ENCODE measurements at regions of chr17 and their contacts with region 1.

Region 1: DNA sequence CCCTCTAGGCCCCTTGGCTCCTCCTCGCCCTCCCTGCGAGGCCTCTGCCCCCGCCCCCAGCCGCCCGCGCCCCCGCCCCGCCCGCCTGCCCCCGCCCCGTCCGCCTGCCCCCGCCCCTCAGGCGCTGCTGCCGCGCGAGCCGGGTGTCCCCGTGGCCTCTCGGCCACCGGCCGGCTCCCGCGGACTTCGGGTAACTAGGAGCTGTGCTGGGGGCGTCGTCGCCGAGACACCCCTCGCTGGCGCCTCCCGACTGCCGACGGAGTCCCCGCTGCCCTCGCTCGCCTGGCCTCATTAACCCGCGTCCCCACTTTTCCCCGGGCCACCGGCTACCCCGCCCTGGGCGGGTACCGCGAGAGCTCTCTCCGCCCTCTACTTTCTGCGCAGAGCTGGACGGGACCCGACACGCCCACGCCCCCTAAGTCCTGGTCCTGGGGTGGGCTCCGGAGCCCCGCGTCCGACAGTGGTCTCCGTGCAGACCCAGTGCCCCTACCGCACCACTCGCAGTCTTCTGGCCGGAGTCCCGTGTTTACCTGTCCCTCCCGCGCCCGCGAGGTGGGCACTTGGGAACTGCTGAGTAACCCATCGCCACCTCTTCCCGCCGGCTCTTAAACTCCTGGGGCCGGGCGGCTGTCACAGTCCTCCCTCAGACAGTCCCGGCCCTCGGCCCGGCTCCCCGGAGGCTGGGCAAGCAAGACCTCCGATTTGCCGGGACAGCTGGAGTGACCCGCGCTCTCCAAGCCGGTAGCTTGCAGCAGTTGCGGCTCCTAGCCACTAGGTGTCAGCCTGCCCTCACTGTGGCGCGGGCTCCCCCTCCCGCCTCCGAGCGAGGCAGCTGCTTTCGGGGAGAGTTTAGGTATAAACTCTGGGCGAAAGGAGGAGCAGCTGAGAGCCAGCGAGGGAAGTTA is at the start of gene TLCD1:
- DNase-seq: peak; percentile 77 to 82
- ATAC-seq: peak; percentile 59 to 65
- H3K4me3 ChIP-seq: peak within 1 kb of the TSS; percentile 70 to 92 (median 80)
- H3K27ac ChIP-seq: peak within 1 kb of the TSS; percentile 56 to 99 (median 98)
- H3K4me1 ChIP-seq: peaks cover 34 to 36% of the 10 kb centered on the region in 2 donors
- H3K27me3 ChIP-seq: no peaks in the 10 kb centered on the region
- CTCF ChIP-seq: peak; percentile 98 to 100 (median 99)
- POLR2A ChIP-seq: no peak
- total RNA-seq, gene TLCD1: 0.46 to 0.82 (median 0.75) TPM in 3 of 4 donors, not detected in the other

Region 2: GRCh38 chr17:28743225-28744103 is 17.0 kb after region 1 on chr17 and contains the start of gene TRAF4:
- in situ Hi-C with region 1: no loop called
- intact Hi-C with region 1: loop called (anchors 1 kb)
- DNase-seq: no peak
- ATAC-seq: peak; percentile 79 to 80
- H3K4me3 ChIP-seq: peak within 1 kb of the TSS; percentile 71 to 89 (median 76)
- H3K27ac ChIP-seq: peak within 1 kb of the TSS; percentile 68 to 81 (median 72)
- H3K4me1 ChIP-seq: peaks cover 20 to 29% of the 10 kb centered on the region in 2 donors
- H3K27me3 ChIP-seq: no peaks in the 10 kb centered on the region
- CTCF ChIP-seq: peak; percentile 8 to 55 (median 41)
- POLR2A ChIP-seq: peak; percentile 90 to 91
- total RNA-seq, gene TRAF4: 2.0 to 6.4 (median 3.8) TPM

Region 3: DNA sequence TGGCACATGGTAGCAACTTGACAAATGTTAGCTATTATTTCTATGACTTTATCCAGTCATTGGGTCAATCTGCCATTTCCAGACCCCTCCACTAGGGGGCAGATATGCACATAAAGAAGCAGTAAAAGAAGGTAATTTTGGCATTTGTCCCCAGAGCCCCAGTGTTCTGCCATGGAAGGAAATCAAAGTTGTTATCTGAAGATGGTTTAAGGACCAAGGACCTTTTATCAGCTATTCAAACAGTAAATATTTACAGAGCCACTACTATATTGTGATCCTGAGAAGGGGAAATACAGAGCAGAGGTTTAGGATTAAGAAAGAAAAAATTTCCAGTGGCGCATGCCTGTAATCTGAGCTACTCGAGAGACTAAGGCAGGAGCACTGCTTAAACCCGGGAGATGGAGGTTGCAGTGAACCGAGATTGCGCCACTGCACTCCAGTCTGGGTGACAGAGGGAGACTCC is 37.4 kb after region 1 on chr17:
- in situ Hi-C with region 1: no loop called
- intact Hi-C with region 1: loop called (anchors 5 kb)
- DNase-seq: peak; percentile 55 to 72
- ATAC-seq: peak; percentile 53 to 67
- H3K4me3 ChIP-seq: no peak overlapping the region
- H3K27ac ChIP-seq: peak overlapping the region in 3 of 4 donors; percentile 29 to 55 (median 40)
- H3K4me1 ChIP-seq: peaks cover 4 to 12% of the 10 kb centered on the region in 2 donors
- H3K27me3 ChIP-seq: no peaks in the 10 kb centered on the region
- CTCF ChIP-seq: peak; percentile 83 to 93 (median 87)
- POLR2A ChIP-seq: no peak

Region 4: DNA sequence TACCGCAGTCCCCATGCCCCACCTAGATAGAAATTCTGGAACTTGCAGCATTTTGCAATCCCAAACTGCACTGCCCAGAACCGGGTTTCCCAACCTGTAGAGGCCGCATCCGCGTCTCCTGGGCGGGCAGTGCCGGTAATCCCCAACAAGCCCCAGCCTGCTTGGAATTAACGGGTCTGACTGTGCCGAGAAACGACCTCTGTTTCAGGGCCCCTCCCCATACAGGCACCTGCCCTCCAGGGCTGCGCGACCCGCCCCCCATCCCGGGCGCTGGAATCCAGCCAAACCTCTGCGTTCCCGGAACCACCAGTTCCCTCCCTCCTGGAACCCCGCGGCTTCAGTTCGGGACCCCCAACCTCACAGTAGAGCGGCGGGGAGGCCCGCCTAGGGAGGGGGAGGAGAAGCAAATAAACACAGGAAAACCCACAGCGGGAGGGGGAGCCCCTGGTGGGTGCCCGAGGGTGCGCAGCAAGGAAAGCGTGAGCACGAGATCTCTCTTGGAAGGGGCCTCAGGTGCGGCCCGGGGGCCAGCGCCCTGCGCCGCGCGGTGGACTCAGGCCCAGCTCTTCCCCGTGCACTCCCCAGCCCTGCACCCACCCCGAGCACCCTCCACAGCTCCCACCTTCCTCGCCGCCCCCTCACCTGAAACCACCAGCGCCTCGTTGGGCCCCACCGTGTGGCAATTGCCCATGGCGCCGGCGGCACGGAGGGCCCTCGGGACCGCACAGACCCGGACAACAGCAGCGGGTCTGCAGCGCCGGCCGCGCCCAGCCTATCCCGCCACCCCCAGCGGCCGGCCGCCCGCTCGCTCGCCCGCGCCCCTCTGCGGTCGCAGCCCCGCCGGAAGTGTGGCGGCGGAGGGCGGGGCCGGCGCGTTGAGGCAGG is 170.6 kb after region 1 on chr17 and contains the start of gene FLOT2:
- in situ Hi-C with region 1: no loop called
- intact Hi-C with region 1: loop called (anchors 5 kb)
- DNase-seq: peak; percentile 29 to 53
- ATAC-seq: peak; percentile 63 to 70
- H3K4me3 ChIP-seq: peak within 1 kb of the TSS; percentile 70 to 92 (median 84)
- H3K27ac ChIP-seq: peak within 1 kb of the TSS; percentile 82 to 89 (median 85)
- H3K4me1 ChIP-seq: peaks cover 23 to 26% of the 10 kb centered on the region in 2 donors
- H3K27me3 ChIP-seq: no peaks in the 10 kb centered on the region
- CTCF ChIP-seq: peak; percentile 19 to 51 (median 37)
- POLR2A ChIP-seq: peak; percentile 17 to 43
- total RNA-seq, gene FLOT2: 15.3 to 37.9 (median 28.4) TPM

Region 5: GRCh38 chr17:29111816-29112499 is 385.5 kb after region 1 on chr17:
- in situ Hi-C with region 1: no loop called
- intact Hi-C with region 1: loop called (anchors 5 kb)
- DNase-seq: peak; percentile 63 to 95
- ATAC-seq: peak; percentile 77 to 80
- H3K4me3 ChIP-seq: no peak overlapping the region
- H3K27ac ChIP-seq: peak overlapping the region; percentile 78 to 98 (median 84)
- H3K4me1 ChIP-seq: peaks cover 74% of the 10 kb centered on the region in 2 donors
- H3K27me3 ChIP-seq: no peaks in the 10 kb centered on the region
- CTCF ChIP-seq: peak; percentile 83 to 93 (median 91)
- POLR2A ChIP-seq: no peak

Region 6: DNA sequence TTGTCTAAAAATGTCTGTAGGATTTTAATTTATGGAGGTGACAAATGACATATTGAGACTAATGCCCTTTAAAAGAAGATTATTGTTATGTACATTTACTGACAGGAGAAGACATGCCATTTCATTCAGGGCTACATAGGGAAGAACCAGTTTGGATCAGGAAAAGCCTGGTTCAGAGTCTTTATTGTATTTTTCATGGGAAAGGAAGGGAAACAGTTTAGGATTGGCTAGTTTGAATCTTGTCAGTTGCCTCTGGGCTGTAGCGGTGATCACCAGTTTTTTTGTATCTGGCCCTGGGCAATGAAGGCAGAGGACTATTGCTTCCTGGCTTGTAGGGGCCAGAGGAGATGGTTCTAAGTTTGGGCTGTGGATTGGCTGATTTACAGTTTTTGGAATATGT is 1421.9 kb after region 1 on chr17:
- in situ Hi-C with region 1: no loop called
- intact Hi-C with region 1: no loop called
- DNase-seq: no peak
- ATAC-seq: no peak
- H3K4me3 ChIP-seq: no peak overlapping the region
- H3K27ac ChIP-seq: no peak overlapping the region
- H3K4me1 ChIP-seq: no peaks in the 10 kb centered on the region
- H3K27me3 ChIP-seq: no peaks in the 10 kb centered on the region
- CTCF ChIP-seq: no peak
- POLR2A ChIP-seq: no peak